ENCODE measurements at regions of chr12 and their contacts with region 1.

Region 1: GRCh38 chr12:103909811-103910210 is 20.4 kb upstream of the HSP90B1 start:
- DNase-seq: peak in 1 of 2 donors; percentile 55
- H3K4me3 ChIP-seq: no peak overlapping the region
- H3K27ac ChIP-seq: peak overlapping the region; percentile 63 to 66
- H3K4me1 ChIP-seq: no peaks in the 10 kb centered on the region
- H3K27me3 ChIP-seq: no peaks in the 10 kb centered on the region
- CTCF ChIP-seq: no peak
- POLR2A ChIP-seq: no peak

Region 2: GRCh38 chr12:101909646-101910045 is 2000.2 kb before region 1 on chr12:
- intact Hi-C with region 1: loop called (anchors 10 kb)
- DNase-seq: no peak
- H3K4me3 ChIP-seq: peak overlapping the region in 2 of 3 donors; percentile 2 to 12
- H3K27ac ChIP-seq: peak overlapping the region in 1 of 2 donors; percentile 53
- H3K4me1 ChIP-seq: no peaks in the 10 kb centered on the region
- H3K27me3 ChIP-seq: no peaks in the 10 kb centered on the region
- CTCF ChIP-seq: no peak
- POLR2A ChIP-seq: no peak

Region 3: GRCh38 chr12:103877934-103878510 is 31.8 kb before region 1 on chr12:
- intact Hi-C with region 1: no loop called
- DNase-seq: peak in 1 of 2 donors; percentile 53
- H3K4me3 ChIP-seq: no peak overlapping the region
- H3K27ac ChIP-seq: no peak overlapping the region
- H3K4me1 ChIP-seq: no peaks in the 10 kb centered on the region
- H3K27me3 ChIP-seq: no peaks in the 10 kb centered on the region
- CTCF ChIP-seq: peak; percentile 60 to 67 (median 66)
- POLR2A ChIP-seq: no peak